ENCODE measurements at regions of chr12 and their contacts with region 1.

Region 1: DNA sequence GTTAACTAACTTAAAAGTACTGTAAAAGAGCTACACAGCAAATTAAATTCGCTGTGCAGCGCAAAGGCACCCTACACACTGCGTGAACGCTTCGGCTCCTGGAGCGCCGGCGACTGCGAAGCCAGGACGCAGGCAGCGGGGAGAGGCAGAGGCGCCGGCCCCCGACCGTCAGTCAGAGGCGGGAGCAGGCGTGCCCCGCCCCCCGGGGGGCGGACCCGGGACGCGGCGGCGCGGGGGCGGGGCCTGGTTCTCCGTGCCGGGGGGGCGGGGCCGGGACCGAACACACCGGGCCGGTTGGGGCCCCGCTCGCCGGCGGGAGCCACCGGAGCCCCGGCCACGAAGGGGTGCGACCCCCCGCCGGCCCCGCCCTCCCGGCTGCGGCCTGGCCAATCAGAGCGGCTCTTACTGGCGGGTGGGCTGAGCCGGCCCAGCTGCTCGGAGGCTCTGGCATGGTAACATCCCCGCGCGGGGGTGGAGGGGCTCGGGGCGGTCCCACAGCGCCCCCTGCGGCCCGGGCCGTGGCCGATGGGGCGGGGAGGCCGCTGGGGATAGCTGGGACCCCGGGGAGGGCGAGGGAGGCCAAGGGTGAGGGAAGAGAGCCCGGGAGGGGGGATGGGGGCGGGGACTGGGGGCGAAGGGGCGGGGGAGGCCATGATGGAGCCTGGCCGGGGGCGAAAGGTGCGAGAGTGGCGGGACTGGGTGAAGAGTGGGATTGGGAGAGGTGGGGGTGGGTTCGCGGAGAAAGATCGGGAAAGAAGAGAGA is at the start of gene PRPF40B:
- DNase-seq: peak; percentile 87 to 95
- ATAC-seq: peak; percentile 88 to 89
- H3K4me3 ChIP-seq: peak within 1 kb of the TSS; percentile 63
- H3K27ac ChIP-seq: peak within 1 kb of the TSS; percentile 79 to 90
- H3K4me1 ChIP-seq: peaks cover 39% of the 10 kb centered on the region
- CTCF ChIP-seq: peak; percentile 64
- EP300 ChIP-seq: no peak
- POLR2A ChIP-seq: peak; percentile 93
- RAD21 ChIP-seq: peak; percentile 23 to 51; a peak in 3 of 5 replicates
- polyA plus RNA-seq, gene PRPF40B: 17.0 TPM in 2 replicates

Region 2: GRCh38 chr12:49636979-49637755 is 13.8 kb after region 1 on chr12:
- CTCF ChIA-PET with region 1: interaction called, 35 read pairs
- POLR2A ChIA-PET with region 1: interaction called, 3 read pairs
- DNase-seq: peak; percentile 67 to 81
- ATAC-seq: peak; percentile 82 to 96
- H3K4me3 ChIP-seq: no peak overlapping the region
- H3K27ac ChIP-seq: peak overlapping the region in 1 of 2 experiments; percentile 40; a peak in 2 of 6 replicates
- H3K4me1 ChIP-seq: no peaks in the 10 kb centered on the region
- CTCF ChIP-seq: peak; percentile 47
- EP300 ChIP-seq: no peak
- POLR2A ChIP-seq: no peak
- RAD21 ChIP-seq: peak; percentile 36 to 66; a peak in 3 of 5 replicates

Region 3: GRCh38 chr12:49750027-49750995 is 127.0 kb after region 1 on chr12:
- CTCF ChIA-PET with region 1: no interaction called
- POLR2A ChIA-PET with region 1: no interaction called
- DNase-seq: peak in 1 of 2 experiments; percentile 49
- ATAC-seq: peak; percentile 71 to 91
- H3K4me3 ChIP-seq: no peak overlapping the region
- H3K27ac ChIP-seq: peak overlapping the region; percentile 63 to 78
- H3K4me1 ChIP-seq: peaks cover 21% of the 10 kb centered on the region
- CTCF ChIP-seq: no peak
- EP300 ChIP-seq: no peak
- POLR2A ChIP-seq: no peak
- RAD21 ChIP-seq: no peak